ENCODE measurements at regions of chr3 and their contacts with region 1.

Region 1: DNA sequence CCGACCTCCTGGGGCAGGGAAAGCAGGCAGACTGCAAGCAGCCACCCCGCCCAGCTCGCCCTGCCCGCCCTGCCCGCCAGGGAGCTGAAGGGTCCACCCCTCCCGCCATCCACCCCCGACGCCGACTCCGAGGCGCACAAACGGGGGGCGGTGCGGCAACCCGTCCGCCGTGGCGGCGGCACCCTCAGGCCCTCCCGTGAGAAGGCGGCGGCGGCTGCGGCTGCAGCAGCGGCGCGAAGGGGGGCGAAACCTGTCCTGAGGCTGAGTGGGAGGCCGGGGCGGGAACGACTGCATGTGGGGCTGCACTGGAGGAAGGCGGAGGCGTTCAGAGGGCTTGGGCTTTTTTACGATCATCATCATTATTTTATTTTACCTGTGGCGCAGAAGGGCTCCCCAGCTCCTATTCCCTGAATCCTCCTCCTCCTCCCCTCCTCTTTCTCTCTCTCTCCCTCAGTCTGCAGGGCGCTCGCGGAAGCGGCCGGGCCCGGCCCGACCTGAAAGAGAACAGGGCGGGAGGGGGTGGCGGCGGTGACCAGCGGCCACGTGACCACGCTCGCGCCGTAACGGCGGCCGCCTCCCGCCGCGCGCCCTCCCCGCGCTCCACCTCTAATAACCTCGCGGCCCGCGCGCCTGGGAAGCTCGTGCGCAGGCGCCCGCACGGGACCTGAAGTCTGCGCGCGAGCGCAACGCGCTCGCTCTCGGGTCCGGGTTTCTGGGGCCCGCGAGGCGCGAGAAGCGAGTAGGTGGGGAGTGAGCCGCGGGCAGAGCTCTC is at the start of gene TBC1D5:
- DNase-seq: peak; percentile 94 to 96 (median 95)
- H3K4me3 ChIP-seq: peak within 1 kb of the TSS; percentile 74 to 91 (median 88)
- H3K4me3 Mint-ChIP-seq: peak within 1 kb of the TSS; percentile 95 to 97
- H3K27ac ChIP-seq: peak within 1 kb of the TSS; percentile 94 to 96
- H3K27ac Mint-ChIP-seq: peak within 1 kb of the TSS; percentile 94 to 98 (median 97)
- H3K4me1 ChIP-seq: peaks cover 24 to 36% of the 10 kb centered on the region in 2 donors
- H3K4me1 Mint-ChIP-seq: peaks cover 45% of the 10 kb centered on the region
- H3K27me3 ChIP-seq: no peaks in the 10 kb centered on the region
- H3K27me3 Mint-ChIP-seq: peaks cover 0 to 2% (median 0%) of the 10 kb centered on the region in 3 donors
- CTCF ChIP-seq: no peak
- polyA plus RNA-seq, gene TBC1D5: 17.6 to 35.3 (median 21.0) TPM

Region 2: DNA sequence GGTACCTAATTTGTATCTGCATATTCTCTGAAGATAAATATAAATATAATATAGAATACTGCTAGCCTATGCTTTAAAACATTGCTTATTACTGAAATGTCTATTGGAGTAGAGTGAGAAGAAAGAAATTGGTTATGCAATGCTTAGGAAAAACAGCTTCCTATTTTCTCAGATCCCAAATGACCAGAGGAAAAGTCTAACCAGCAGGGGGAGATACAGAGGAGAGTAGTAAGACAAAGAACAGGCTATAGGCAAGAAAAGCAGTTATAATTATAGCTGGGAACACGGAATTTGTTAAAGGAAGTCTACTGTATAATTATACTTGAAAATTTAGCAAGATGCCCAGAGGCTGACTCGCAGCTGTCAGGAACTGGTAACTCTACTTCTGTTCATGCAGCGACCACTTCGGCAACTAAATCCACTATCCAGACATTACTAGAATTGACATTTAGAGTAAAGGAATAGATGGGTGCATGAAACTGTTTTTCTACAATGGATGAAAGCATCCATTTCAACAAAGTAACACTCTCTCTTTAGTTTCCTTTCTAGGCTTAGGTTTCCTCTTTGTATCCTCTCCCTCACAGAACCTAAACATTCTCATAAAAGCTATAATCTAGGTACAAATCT is 97.1 kb before region 1 on chr3:
- intact Hi-C with region 1: loop called in 1 of 2 experiments (anchors 10 kb)
- DNase-seq: peak; percentile 23 to 63 (median 51)
- H3K4me3 ChIP-seq: no peak overlapping the region
- H3K4me3 Mint-ChIP-seq: no peak overlapping the region
- H3K27ac ChIP-seq: no peak overlapping the region
- H3K27ac Mint-ChIP-seq: no peak overlapping the region
- H3K4me1 ChIP-seq: peaks cover 0 to 7% of the 10 kb centered on the region in 2 donors
- H3K4me1 Mint-ChIP-seq: peaks cover 5% of the 10 kb centered on the region
- H3K27me3 ChIP-seq: no peaks in the 10 kb centered on the region
- H3K27me3 Mint-ChIP-seq: no peaks in the 10 kb centered on the region
- CTCF ChIP-seq: peak; percentile 72